H1 (cell line): ENCODE measurements at regions of chr11 and their contacts with region 1.

Region 1: GRCh38 chr11:66311965-66312548 is 4.8 kb downstream of the CD248 start:
- DNase-seq: peak; percentile 71 to 92
- H3K4me3 ChIP-seq: peak overlapping the region; percentile 44 to 79 (median 71)
- H3K27ac ChIP-seq: peak overlapping the region; percentile 7
- H3K4me1 ChIP-seq: peaks cover 3 to 17% (median 8%) of the 10 kb centered on the region in 4 experiments
- H3K27me3 ChIP-seq: peaks cover 0 to 3% (median 0%) of the 10 kb centered on the region in 4 experiments; a peak in 2 of 7 replicates
- CTCF ChIP-seq: peak in 2 of 3 experiments; percentile 84 to 93; a peak in 3 of 4 replicates
- EP300 ChIP-seq: no peak
- POLR2A ChIP-seq: peak in 1 of 2 experiments; percentile 35; a peak in 1 of 3 replicates
- RAD21 ChIP-seq: peak; percentile 92 to 93

Region 2: GRCh38 chr11:66222358-66223149 is 89.5 kb before region 1 on chr11:
- CTCF ChIA-PET with region 1: interaction called, 10 read pairs
- POLR2A ChIA-PET with region 1: no interaction called
- DNase-seq: peak; percentile 93 to 95
- H3K4me3 ChIP-seq: no peak overlapping the region
- H3K27ac ChIP-seq: 0 out of 2 replicates have a peak overlapping the region, but pooled peaks have one; percentile 47
- H3K4me1 ChIP-seq: peaks cover 0 to 2% (median 0%) of the 10 kb centered on the region in 4 experiments; a peak in 1 of 7 replicates
- H3K27me3 ChIP-seq: no peaks in the 10 kb centered on the region
- CTCF ChIP-seq: peak; percentile 100
- EP300 ChIP-seq: 0 out of 3 replicates have a peak, but pooled peaks of 1 of the 2 experiments have one; percentile 4
- POLR2A ChIP-seq: no peak
- RAD21 ChIP-seq: peak; percentile 95 to 97

Region 3: DNA sequence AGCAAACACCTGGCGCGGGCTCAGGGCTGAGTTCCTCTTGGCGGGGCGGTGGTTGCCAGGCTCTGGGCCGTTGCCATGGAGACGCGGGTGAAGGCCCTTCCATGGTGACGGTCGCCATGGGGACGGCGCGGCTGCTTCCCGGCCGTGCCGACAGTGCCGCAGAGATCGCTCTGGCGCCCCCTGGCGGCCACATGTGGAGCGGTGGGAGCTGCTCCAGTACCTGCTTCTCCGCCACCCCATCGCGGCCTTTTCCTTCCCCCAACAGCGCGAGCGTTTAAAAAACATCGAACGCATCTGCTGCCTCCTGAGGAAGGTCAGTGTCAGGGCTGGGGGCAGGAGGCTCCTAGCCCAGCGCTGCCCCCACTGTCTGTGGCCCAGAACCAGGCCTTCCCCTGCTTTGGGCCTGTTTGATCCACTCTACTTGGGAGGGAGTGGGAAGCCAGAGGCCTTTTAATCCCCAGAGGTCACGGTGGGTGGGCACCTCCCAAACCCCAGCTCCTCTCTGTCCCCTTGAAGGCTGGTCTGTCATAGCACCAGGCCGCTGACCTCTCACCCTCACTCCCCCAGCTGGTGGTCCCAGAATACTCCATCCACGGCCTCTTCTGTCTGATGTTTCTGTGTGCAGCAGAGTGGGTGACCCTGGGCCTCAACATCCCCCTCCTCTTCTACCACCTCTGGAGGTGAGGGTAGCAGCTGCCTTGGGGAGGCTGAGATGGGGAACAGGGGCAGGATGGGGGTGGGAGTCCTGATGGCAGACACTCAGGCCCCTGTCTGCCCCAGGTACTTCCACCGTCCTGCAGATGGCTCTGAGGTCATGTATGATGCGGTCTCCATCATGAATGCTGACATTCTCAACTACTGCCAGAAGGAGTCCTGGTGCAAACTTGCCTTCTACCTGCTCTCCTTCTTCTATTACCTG is 29.3 kb before region 1 on chr11:
- CTCF ChIA-PET with region 1: interaction called, 57 read pairs
- POLR2A ChIA-PET with region 1: interaction called, 9 read pairs
- DNase-seq: peak; percentile 93 to 100
- H3K4me3 ChIP-seq: no peak overlapping the region; a peak in 2 of 8 replicates
- H3K27ac ChIP-seq: no peak overlapping the region; the same call in 1 of the 2 replicates
- H3K4me1 ChIP-seq: peaks cover 0 to 16% (median 13%) of the 10 kb centered on the region in 4 experiments; a peak in 5 of 7 replicates
- H3K27me3 ChIP-seq: peaks cover 0 to 4% (median under 1%) of the 10 kb centered on the region in 4 experiments; a peak in 2 of 7 replicates
- CTCF ChIP-seq: peak; percentile 91 to 95 (median 95)
- EP300 ChIP-seq: peak in 1 of 2 experiments; percentile 23; a peak in 2 of 3 replicates
- POLR2A ChIP-seq: 0 out of 3 replicates have a peak, but pooled peaks of 1 of the 2 experiments have one; percentile 28
- RAD21 ChIP-seq: peak; percentile 55 to 72

Region 4: DNA sequence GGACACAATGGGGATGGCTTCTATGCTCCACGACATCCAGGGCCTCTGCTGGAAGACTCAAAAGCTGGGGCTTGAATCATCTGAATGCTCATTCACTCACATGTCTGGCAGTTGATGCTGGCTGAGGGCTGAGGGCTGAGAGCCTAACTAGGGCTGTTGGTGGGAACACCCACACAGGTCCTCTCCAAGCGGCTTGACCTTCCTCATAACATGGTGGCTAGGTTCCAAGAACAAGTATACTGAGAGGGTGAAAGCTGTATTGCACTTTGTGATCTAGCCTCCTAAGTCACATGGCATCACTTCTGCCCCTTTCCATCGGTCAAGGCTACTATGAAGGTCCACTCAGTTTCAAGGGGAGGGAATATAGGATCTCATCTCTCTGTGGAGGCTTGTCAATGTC is 12.9 kb before region 1 on chr11:
- CTCF ChIA-PET with region 1: interaction called, 75 read pairs
- POLR2A ChIA-PET with region 1: interaction called, 16 read pairs
- DNase-seq: no peak
- H3K4me3 ChIP-seq: no peak overlapping the region
- H3K27ac ChIP-seq: no peak overlapping the region
- H3K4me1 ChIP-seq: peaks cover 4 to 13% (median 6%) of the 10 kb centered on the region in 4 experiments; a peak in 6 of 7 replicates
- H3K27me3 ChIP-seq: peaks cover 0 to 3% (median 0%) of the 10 kb centered on the region in 4 experiments; a peak in 1 of 7 replicates
- CTCF ChIP-seq: no peak
- EP300 ChIP-seq: no peak
- POLR2A ChIP-seq: no peak
- RAD21 ChIP-seq: no peak

Region 5: GRCh38 chr11:66336234-66337102 is 24.4 kb after region 1 on chr11 and contains the start of gene RIN1:
- CTCF ChIA-PET with region 1: interaction called, 242 read pairs
- POLR2A ChIA-PET with region 1: interaction called, 25 read pairs
- DNase-seq: peak in 1 of 2 experiments; percentile 77
- H3K4me3 ChIP-seq: peak within 1 kb of the TSS; percentile 1 to 62 (median 48); a peak in 7 of 8 replicates
- H3K27ac ChIP-seq: 0 out of 2 replicates have a peak within 1 kb of the TSS, but pooled peaks have one; percentile 20
- H3K4me1 ChIP-seq: peaks cover 0 to 20% (median 14%) of the 10 kb centered on the region in 4 experiments; a peak in 6 of 7 replicates
- H3K27me3 ChIP-seq: no peaks in the 10 kb centered on the region; a peak in 2 of 7 replicates
- CTCF ChIP-seq: peak in 2 of 3 experiments; percentile 65 to 75; a peak in 3 of 4 replicates
- EP300 ChIP-seq: no peak
- POLR2A ChIP-seq: no peak; a peak in 1 of 3 replicates
- RAD21 ChIP-seq: peak; percentile 70 to 79
- total RNA-seq, gene RIN1: 5.4 and 6.6 TPM in 2 replicates

Region 6: GRCh38 chr11:66363805-66364535 is 51.9 kb after region 1 on chr11:
- CTCF ChIA-PET with region 1: interaction called, 14 read pairs
- POLR2A ChIA-PET with region 1: interaction called, 8 read pairs
- DNase-seq: peak; percentile 77 to 99
- H3K4me3 ChIP-seq: no peak overlapping the region
- H3K27ac ChIP-seq: no peak overlapping the region
- H3K4me1 ChIP-seq: peaks cover 0 to 3% (median 0%) of the 10 kb centered on the region in 4 experiments; a peak in 2 of 7 replicates
- H3K27me3 ChIP-seq: no peaks in the 10 kb centered on the region
- CTCF ChIP-seq: peak; percentile 81 to 98 (median 88)
- EP300 ChIP-seq: no peak; a peak in 1 of 3 replicates
- POLR2A ChIP-seq: no peak; a peak in 1 of 3 replicates
- RAD21 ChIP-seq: peak; percentile 32 to 52; a peak in 3 of 4 replicates